ENCODE measurements at regions of chr6 and their contacts with region 1.

Region 1: DNA sequence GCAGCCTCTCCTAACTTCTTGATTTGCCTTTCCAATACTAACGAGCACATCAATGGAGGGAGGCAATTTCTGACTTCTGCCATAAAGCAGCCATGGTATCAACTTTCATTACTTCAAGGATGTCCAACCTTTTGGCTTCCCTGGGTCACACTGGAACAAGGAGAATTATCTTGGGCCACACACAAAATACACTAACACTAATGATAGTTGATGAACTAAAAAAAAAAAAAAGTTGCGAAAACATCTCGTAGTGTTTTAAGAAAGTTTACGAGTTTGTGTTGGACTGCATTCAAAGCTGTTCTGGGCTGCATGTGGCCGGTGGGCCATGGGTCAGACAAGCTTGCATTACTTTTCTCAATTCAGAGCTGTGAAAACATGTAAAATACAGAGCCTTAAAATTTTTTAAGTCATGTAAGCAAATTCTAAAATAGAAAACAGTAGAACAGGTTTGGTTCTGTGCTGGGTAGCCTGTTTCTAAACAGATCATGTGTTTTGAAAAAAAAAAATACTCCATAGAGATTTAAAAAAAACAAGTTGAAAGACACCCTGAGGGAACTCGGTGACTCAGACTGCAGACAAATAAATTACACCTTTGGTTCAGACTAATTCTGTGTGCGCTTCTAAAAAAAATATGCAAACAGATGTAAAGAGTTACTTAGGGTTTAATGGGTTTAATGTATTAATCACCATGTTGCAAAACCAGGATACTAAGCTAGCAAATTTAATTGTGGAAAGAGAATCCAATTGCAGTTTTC is 43.6 kb upstream of the SLC22A23 start:
- DNase-seq: no peak
- H3K4me3 ChIP-seq: no peak overlapping the region
- H3K4me3 Mint-ChIP-seq: no peak overlapping the region
- H3K27ac Mint-ChIP-seq: no peak overlapping the region
- H3K4me1 ChIP-seq: peaks cover 35% of the 10 kb centered on the region
- H3K4me1 Mint-ChIP-seq: peaks cover 22% of the 10 kb centered on the region
- H3K27me3 ChIP-seq: no peaks in the 10 kb centered on the region
- H3K27me3 Mint-ChIP-seq: no peaks in the 10 kb centered on the region
- CTCF ChIP-seq: no peak

Region 2: GRCh38 chr6:3277851-3278416 is 222.5 kb before region 1 on chr6:
- CTCF ChIA-PET with region 1: no interaction called
- POLR2A ChIA-PET with region 1: no interaction called
- intact Hi-C with region 1: loop called (anchors 5 kb)
- DNase-seq: no peak
- H3K4me3 ChIP-seq: no peak overlapping the region
- H3K4me3 Mint-ChIP-seq: no peak overlapping the region
- H3K27ac Mint-ChIP-seq: no peak overlapping the region
- H3K4me1 ChIP-seq: no peaks in the 10 kb centered on the region
- H3K4me1 Mint-ChIP-seq: no peaks in the 10 kb centered on the region
- H3K27me3 ChIP-seq: no peaks in the 10 kb centered on the region
- H3K27me3 Mint-ChIP-seq: no peaks in the 10 kb centered on the region
- CTCF ChIP-seq: no peak

Region 3: DNA sequence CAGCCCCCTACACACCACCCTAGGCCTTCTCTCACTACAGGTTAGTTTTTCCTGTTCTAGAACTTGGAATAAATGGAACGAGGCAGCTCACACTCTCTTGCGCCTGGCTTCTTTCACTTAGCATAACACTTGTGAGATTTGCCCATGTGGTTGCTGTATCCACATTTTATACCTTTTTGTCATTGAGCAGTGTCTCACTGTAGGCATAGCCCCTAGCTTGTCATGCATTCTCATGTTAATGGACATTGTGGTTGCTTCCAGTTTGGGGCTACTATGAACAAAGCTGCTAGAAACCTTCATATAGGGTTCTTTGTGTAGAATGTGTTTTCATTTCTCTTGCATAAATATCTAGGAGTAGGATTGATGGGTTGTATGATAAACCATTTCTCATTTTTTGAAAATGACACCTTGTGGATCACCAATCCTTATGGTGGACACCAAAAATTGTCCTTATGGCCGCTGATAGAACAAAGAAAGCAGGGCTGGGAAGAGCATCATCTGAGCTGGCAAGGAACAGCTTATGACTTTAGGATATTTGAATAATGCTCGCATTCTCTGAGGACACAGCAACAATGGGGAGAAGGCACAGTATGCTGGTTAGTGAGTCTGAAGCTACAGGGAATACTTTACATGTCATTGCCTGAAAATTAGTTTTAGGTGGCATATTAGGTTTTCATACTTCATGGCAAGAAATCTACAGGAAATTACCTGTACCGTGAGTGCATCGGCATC is 33.8 kb before region 1 on chr6:
- CTCF ChIA-PET with region 1: no interaction called
- POLR2A ChIA-PET with region 1: no interaction called
- intact Hi-C with region 1: no loop called
- DNase-seq: no peak
- H3K4me3 ChIP-seq: no peak overlapping the region
- H3K4me3 Mint-ChIP-seq: no peak overlapping the region
- H3K27ac Mint-ChIP-seq: no peak overlapping the region
- H3K4me1 ChIP-seq: 0 out of 2 replicates have a peak, but pooled peaks cover 2% of the 10 kb centered on the region
- H3K4me1 Mint-ChIP-seq: peaks cover 5% of the 10 kb centered on the region
- H3K27me3 ChIP-seq: no peaks in the 10 kb centered on the region
- H3K27me3 Mint-ChIP-seq: no peaks in the 10 kb centered on the region
- CTCF ChIP-seq: no peak

Region 4: DNA sequence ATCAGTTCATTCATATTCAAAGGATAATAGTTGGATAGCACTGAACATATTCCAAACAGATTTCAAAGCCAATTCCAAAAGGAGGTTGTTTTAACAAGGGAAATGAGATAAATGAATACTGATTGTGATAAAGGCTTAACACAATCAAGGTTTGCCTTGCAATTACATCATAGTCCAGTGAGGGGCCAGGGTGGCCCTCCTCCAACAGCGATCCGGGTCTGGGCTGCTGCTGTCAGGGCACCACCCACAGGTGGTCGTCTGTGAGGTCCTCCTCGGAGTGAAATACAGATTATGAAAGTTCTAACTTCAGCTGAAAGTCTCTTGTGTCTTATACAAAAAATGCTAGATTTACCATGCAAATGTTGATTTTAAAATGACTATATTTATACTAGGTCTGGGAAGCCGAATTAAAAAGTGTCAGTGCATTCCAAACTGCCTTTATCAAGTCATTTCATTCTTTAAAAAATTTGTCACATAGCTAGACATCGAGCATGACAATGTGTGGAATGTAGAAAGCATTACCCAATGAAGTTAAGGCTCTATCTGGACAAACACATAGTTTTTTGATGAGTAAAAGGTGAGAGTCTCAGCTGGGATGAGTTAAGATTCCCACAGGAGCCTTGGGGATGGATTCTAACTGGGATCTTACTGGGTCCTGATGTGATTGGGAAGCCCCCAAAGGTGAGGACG is 22.3 kb after region 1 on chr6:
- CTCF ChIA-PET with region 1: no interaction called
- POLR2A ChIA-PET with region 1: interaction called, 7 read pairs
- intact Hi-C with region 1: loop called (anchors 2 kb)
- DNase-seq: peak; percentile 48 to 50
- H3K4me3 ChIP-seq: no peak overlapping the region
- H3K4me3 Mint-ChIP-seq: peak overlapping the region; percentile 23
- H3K27ac Mint-ChIP-seq: peak overlapping the region; percentile 88
- H3K4me1 ChIP-seq: peaks cover 83% of the 10 kb centered on the region
- H3K4me1 Mint-ChIP-seq: peaks cover 37% of the 10 kb centered on the region
- H3K27me3 ChIP-seq: no peaks in the 10 kb centered on the region
- H3K27me3 Mint-ChIP-seq: no peaks in the 10 kb centered on the region
- CTCF ChIP-seq: no peak

Measured in Caco-2 (cell line).